CD4-positive, alpha-beta memory T cell (primary cell): ENCODE measurements at regions of chr13 and their contacts with region 1.

Region 1: GRCh38 chr13:44703371-44703770 is 127.2 kb upstream of the TSC22D1 start:
- DNase-seq: no peak
- H3K4me3 ChIP-seq: no peak overlapping the region
- H3K4me3 Mint-ChIP-seq: no peak overlapping the region
- H3K27ac ChIP-seq: no peak overlapping the region
- H3K27ac Mint-ChIP-seq: no peak overlapping the region
- H3K4me1 ChIP-seq: no peaks in the 10 kb centered on the region
- H3K4me1 Mint-ChIP-seq: no peaks in the 10 kb centered on the region
- H3K27me3 ChIP-seq: no peaks in the 10 kb centered on the region
- H3K27me3 Mint-ChIP-seq: peaks cover 2 to 10% of the 10 kb centered on the region in 2 donors

Region 2: DNA sequence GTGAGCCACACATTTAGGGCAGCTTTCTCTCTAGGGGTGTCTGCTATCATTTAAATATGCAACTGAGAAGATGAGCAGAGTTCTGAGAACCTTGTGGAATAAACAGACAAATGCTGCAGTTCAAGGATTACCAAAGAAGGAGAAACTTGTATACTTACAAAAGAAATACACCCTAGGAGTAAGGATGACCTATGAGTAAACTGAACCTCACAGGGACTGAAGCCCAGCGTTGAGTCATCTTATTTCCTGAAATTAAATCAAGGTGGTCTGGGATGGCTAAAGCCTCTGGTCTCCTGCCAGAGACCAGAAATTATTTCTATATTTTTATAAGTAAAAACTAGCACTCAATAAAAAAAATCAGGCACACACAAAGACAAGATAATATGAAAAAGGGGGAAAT is 1881.9 kb before region 1 on chr13:
- CTCF ChIA-PET with region 1: no interaction called
- POLR2A ChIA-PET with region 1: no interaction called
- intact Hi-C with region 1: no loop called
- DNase-seq: no peak
- H3K4me3 ChIP-seq: no peak overlapping the region
- H3K4me3 Mint-ChIP-seq: no peak overlapping the region
- H3K27ac ChIP-seq: no peak overlapping the region
- H3K27ac Mint-ChIP-seq: no peak overlapping the region
- H3K4me1 ChIP-seq: no peaks in the 10 kb centered on the region
- H3K4me1 Mint-ChIP-seq: no peaks in the 10 kb centered on the region
- H3K27me3 ChIP-seq: no peaks in the 10 kb centered on the region
- H3K27me3 Mint-ChIP-seq: peaks cover 13 to 15% of the 10 kb centered on the region in 2 donors

Region 3: DNA sequence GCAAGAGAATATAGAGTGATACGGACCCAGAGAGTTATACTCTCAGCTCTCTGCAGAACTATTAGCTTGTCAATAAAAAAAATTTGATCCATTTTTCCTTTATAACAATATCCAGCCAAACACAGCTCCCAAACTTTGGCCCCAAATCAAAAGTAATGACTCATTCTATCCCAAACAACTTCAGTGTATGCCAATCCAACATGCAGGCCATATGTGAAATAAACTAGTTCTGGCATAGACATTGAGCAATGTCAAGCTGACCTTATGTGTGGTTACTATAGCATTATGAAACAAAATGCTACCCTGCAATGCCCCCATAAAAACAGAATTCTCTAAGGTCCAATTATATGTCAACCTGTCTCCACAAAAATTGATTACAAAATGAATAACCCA is 1470.5 kb before region 1 on chr13:
- CTCF ChIA-PET with region 1: no interaction called
- POLR2A ChIA-PET with region 1: no interaction called
- intact Hi-C with region 1: no loop called
- DNase-seq: no peak
- H3K4me3 ChIP-seq: no peak overlapping the region
- H3K4me3 Mint-ChIP-seq: no peak overlapping the region
- H3K27ac ChIP-seq: no peak overlapping the region
- H3K27ac Mint-ChIP-seq: peak overlapping the region in 1 of 7 donors; percentile 10
- H3K4me1 ChIP-seq: no peaks in the 10 kb centered on the region
- H3K4me1 Mint-ChIP-seq: no peaks in the 10 kb centered on the region
- H3K27me3 ChIP-seq: no peaks in the 10 kb centered on the region
- H3K27me3 Mint-ChIP-seq: peaks cover 0 to 1% of the 10 kb centered on the region in 2 donors

Region 4: DNA sequence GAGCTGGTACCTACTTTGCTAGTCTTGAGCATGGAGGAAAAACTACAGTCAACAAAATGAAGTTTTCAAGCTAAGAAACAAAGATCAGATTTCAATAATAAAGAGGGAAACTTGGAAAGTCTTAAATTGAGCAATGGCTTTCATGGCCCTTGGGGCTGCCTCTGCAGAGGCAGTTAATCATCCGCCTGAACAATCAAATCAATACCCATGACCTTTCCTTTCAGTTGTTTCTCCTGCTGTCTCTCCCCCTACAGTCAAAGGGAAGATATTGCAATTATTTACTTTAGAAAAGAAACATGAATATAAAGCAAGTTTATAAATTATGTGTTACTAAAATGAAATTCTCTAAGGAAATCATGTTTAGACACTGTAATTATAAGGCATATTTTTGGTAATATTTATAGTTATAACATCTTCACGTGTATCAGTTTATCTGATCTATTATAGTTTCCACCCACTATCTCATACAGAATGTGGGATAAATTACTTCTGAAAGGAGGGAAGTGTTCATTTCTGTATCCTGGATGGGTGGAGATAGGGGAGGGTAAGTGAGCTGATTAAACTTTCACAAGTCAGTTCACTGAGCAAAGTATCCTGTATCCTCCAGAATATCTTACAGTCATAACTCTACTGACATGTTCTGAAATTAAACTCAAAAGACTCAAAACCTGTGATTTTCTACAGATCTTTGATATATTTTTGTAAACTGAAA is 54.8 kb before region 1 on chr13:
- CTCF ChIA-PET with region 1: no interaction called
- POLR2A ChIA-PET with region 1: no interaction called
- intact Hi-C with region 1: loop called (anchors 10 kb)
- DNase-seq: peak in 2 of 5 donors; percentile 4 to 18
- H3K4me3 ChIP-seq: no peak overlapping the region
- H3K4me3 Mint-ChIP-seq: no peak overlapping the region
- H3K27ac ChIP-seq: no peak overlapping the region
- H3K27ac Mint-ChIP-seq: peak overlapping the region in 1 of 7 donors; percentile 47
- H3K4me1 ChIP-seq: no peaks in the 10 kb centered on the region
- H3K4me1 Mint-ChIP-seq: peaks cover 0 to 13% (median 0%) of the 10 kb centered on the region in 4 donors
- H3K27me3 ChIP-seq: no peaks in the 10 kb centered on the region
- H3K27me3 Mint-ChIP-seq: peaks cover 5 to 16% of the 10 kb centered on the region in 2 donors

Region 5: GRCh38 chr13:44685641-44686040 is 17.7 kb before region 1 on chr13:
- CTCF ChIA-PET with region 1: no interaction called
- POLR2A ChIA-PET with region 1: no interaction called
- intact Hi-C with region 1: no loop called
- DNase-seq: no peak
- H3K4me3 ChIP-seq: no peak overlapping the region
- H3K4me3 Mint-ChIP-seq: no peak overlapping the region
- H3K27ac ChIP-seq: no peak overlapping the region
- H3K27ac Mint-ChIP-seq: peak overlapping the region in 2 of 7 donors; percentile 1 to 13
- H3K4me1 ChIP-seq: no peaks in the 10 kb centered on the region
- H3K4me1 Mint-ChIP-seq: peaks cover 0 to 14% (median 5%) of the 10 kb centered on the region in 4 donors
- H3K27me3 ChIP-seq: no peaks in the 10 kb centered on the region
- H3K27me3 Mint-ChIP-seq: peaks cover 5 to 13% of the 10 kb centered on the region in 2 donors